ENCODE measurements at regions of chr11 and their contacts with region 1.

Region 1: DNA sequence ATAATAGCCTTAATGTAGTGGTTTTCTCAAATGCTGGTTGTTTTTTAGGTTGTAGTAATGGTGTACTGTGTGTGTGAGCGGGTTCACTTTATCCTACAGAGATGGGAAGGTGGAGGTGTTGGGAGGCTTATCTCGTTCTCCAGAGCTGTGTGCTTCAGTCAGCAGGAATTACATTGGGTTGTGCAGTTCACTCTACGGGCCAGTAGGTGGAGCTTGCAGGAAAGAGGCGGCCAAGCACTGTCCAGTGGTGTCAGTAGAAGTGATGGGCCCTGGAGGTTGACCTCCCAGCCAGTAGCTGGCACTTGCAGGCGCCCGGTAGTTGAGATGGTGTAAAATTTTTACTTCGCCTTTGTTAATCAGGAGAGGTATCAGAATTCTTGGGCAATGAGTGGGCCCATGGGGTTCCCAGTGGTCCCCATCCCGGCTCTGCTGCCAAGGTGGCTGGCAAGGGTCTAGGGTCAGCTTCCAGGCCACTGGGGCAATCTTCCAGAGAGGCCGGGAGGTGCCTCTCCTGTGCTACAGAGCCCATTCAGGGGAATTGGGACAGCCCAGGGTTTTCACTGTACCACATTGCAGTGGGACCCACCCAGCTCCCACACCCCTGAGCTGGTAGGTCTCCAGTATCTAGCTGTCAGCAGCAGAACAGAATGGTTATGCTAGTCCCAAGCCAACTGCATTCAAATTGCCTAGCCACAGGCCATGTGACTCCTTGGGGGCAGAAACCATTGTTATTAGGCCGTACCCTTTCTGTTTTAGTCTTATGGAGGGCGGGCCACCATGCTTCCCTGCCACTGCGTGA is 43.9 kb downstream of the BIRC2 start:
- DNase-seq: peak; percentile 43 to 69
- H3K4me3 ChIP-seq: no peak overlapping the region
- H3K27ac ChIP-seq: no peak overlapping the region
- H3K4me1 ChIP-seq: no peaks in the 10 kb centered on the region
- H3K27me3 ChIP-seq: no peaks in the 10 kb centered on the region
- CTCF ChIP-seq: peak; percentile 86 to 93 (median 92)
- EP300 ChIP-seq: no peak
- POLR2A ChIP-seq: no peak
- RAD21 ChIP-seq: peak; percentile 72 to 80

Region 2: DNA sequence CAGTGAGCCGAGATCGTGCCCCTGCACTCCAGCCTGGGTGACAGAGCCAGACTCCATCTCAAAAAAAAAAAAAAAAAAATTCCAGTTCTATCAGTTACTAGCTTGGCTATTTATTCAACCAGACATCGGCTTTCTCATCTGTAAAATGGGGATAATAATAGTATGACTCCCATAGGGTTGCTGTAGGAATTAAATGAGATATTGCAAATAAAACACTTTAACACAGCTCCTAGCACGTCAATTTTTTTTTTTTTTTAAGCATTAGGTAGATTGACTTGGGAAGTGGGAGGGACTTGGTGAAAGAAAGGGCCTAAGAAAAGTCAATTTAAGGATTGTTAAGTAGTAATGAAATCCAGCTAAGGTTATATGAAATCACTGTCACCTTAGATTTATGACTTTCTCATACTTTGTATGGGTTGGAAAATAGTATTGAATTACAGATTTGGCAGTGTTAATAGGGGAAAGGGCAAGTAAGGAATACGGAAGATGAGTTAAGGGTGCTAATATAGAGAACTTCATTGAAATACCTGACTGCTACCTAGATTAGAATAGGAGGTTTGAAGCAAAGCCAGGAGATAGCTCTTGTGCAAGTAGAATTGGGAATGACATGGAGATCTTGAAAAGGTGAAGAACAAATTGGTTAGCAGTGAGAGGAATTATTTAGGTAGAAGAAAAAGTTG is 15.0 kb before region 1 on chr11:
- CTCF ChIA-PET with region 1: interaction called, 22 read pairs
- POLR2A ChIA-PET with region 1: interaction called, 3 read pairs
- DNase-seq: no peak
- H3K4me3 ChIP-seq: no peak overlapping the region
- H3K27ac ChIP-seq: no peak overlapping the region
- H3K4me1 ChIP-seq: peaks cover 0 to 5% (median 3%) of the 10 kb centered on the region in 4 experiments; a peak in 5 of 7 replicates
- H3K27me3 ChIP-seq: no peaks in the 10 kb centered on the region
- CTCF ChIP-seq: no peak
- EP300 ChIP-seq: no peak
- POLR2A ChIP-seq: no peak
- RAD21 ChIP-seq: no peak

Region 3: GRCh38 chr11:102415304-102415916 is 24.5 kb after region 1 on chr11:
- CTCF ChIA-PET with region 1: interaction called, 11 read pairs
- POLR2A ChIA-PET with region 1: no interaction called
- DNase-seq: no peak
- H3K4me3 ChIP-seq: no peak overlapping the region
- H3K27ac ChIP-seq: no peak overlapping the region
- H3K4me1 ChIP-seq: no peaks in the 10 kb centered on the region
- H3K27me3 ChIP-seq: no peaks in the 10 kb centered on the region
- CTCF ChIP-seq: no peak
- EP300 ChIP-seq: no peak
- POLR2A ChIP-seq: no peak
- RAD21 ChIP-seq: no peak

Region 4: GRCh38 chr11:102451681-102452460 is 61.0 kb after region 1 on chr11:
- CTCF ChIA-PET with region 1: interaction called, 10 read pairs
- POLR2A ChIA-PET with region 1: interaction called, 6 read pairs
- DNase-seq: peak in 1 of 2 experiments; percentile 72
- H3K4me3 ChIP-seq: peak overlapping the region; percentile 72 to 84 (median 78)
- H3K27ac ChIP-seq: peak overlapping the region; percentile 60; the same call in 1 of the 2 replicates
- H3K4me1 ChIP-seq: peaks cover 3 to 23% (median 16%) of the 10 kb centered on the region in 4 experiments; a peak in 4 of 7 replicates
- H3K27me3 ChIP-seq: peaks cover 0 to 15% (median 3%) of the 10 kb centered on the region in 4 experiments; a peak in 4 of 7 replicates
- CTCF ChIP-seq: no peak
- EP300 ChIP-seq: no peak
- POLR2A ChIP-seq: no peak
- RAD21 ChIP-seq: no peak

Region 5: DNA sequence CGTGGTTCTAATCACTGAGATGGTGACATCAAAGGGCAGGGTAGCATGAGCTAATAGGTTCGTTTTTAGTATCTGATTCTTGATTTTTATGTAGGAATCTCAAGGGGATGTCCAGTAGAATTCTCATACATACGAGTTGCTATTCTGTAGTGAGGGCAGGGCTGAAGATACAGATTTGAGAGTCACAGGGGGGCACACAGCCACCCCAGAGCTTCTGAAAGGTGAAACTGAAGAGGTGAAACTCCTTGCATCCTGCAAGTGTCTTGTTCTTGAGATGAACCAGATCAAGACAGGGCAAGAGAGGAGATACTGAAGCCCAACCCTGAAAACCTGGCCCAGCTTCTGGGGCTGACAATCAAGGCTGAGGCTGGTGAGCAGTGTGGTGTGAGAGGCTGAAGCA is 97.3 kb after region 1 on chr11:
- CTCF ChIA-PET with region 1: interaction called, 11 read pairs
- POLR2A ChIA-PET with region 1: interaction called, 3 read pairs
- DNase-seq: no peak
- H3K4me3 ChIP-seq: no peak overlapping the region
- H3K27ac ChIP-seq: no peak overlapping the region
- H3K4me1 ChIP-seq: no peaks in the 10 kb centered on the region
- H3K27me3 ChIP-seq: no peaks in the 10 kb centered on the region
- CTCF ChIP-seq: no peak
- EP300 ChIP-seq: no peak
- POLR2A ChIP-seq: no peak
- RAD21 ChIP-seq: no peak

Region 6: DNA sequence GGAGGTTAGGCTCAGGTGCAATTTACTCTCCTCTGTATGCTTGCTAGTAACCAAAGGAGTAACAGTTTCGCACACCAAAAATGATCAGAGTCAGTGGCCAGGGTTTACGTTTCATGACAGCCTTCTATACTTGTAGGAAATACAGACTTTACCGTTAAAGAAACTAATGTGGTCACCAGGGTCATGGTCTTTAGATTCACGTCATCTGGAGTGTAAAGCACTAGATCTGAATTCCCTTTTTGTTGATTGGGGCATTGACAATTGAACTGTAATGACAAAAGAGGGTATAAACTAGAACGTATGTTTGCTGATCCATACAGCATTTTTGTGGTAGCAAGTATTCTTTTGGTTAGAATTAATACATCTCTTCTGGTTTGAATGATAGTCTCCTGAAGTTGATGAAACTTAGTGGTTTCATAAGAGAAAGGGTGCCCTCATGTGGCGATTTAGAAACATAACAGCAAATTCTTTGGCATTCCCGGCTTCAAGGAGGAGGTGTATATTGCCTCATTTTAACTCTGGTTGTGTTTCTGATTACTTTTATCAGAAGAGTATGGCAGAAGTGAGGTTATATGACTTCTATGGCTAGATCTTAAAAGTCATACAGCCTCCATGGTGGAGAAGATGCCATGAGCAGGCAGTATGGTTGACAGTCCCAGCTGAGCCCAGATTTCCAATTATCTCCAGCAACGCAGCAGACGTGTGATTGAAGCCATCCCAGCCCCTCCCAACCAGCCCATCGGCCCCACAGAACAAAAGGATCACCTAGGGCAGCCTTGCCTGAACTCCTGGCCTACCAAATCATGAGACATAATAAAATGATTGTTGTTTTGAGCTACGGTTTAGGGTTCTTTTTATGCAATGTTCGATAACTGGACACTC is 104.5 kb after region 1 on chr11:
- CTCF ChIA-PET with region 1: interaction called, 39 read pairs
- POLR2A ChIA-PET with region 1: interaction called, 3 read pairs
- DNase-seq: peak; percentile 9 to 63
- H3K4me3 ChIP-seq: peak overlapping the region in 1 of 4 experiments; percentile 41; a peak in 2 of 8 replicates
- H3K27ac ChIP-seq: no peak overlapping the region
- H3K4me1 ChIP-seq: peaks cover 0 to 6% (median 2%) of the 10 kb centered on the region in 4 experiments; a peak in 2 of 7 replicates
- H3K27me3 ChIP-seq: no peaks in the 10 kb centered on the region
- CTCF ChIP-seq: peak in 2 of 3 experiments; percentile 60 to 68; a peak in 2 of 4 replicates
- EP300 ChIP-seq: no peak
- POLR2A ChIP-seq: no peak
- RAD21 ChIP-seq: peak; percentile 83 to 87

Region 7: GRCh38 chr11:102513869-102514268 is 123.0 kb after region 1 on chr11:
- CTCF ChIA-PET with region 1: interaction called, 15 read pairs
- POLR2A ChIA-PET with region 1: no interaction called
- DNase-seq: no peak
- H3K4me3 ChIP-seq: no peak overlapping the region
- H3K27ac ChIP-seq: no peak overlapping the region
- H3K4me1 ChIP-seq: no peaks in the 10 kb centered on the region
- H3K27me3 ChIP-seq: no peaks in the 10 kb centered on the region
- CTCF ChIP-seq: no peak
- EP300 ChIP-seq: no peak
- POLR2A ChIP-seq: no peak
- RAD21 ChIP-seq: no peak

Measured in H1 (cell line).